Naive thymus-derived CD4-positive, alpha-beta T cell (primary cell): ENCODE measurements at regions of chr4 and their contacts with region 1.

Region 1: DNA sequence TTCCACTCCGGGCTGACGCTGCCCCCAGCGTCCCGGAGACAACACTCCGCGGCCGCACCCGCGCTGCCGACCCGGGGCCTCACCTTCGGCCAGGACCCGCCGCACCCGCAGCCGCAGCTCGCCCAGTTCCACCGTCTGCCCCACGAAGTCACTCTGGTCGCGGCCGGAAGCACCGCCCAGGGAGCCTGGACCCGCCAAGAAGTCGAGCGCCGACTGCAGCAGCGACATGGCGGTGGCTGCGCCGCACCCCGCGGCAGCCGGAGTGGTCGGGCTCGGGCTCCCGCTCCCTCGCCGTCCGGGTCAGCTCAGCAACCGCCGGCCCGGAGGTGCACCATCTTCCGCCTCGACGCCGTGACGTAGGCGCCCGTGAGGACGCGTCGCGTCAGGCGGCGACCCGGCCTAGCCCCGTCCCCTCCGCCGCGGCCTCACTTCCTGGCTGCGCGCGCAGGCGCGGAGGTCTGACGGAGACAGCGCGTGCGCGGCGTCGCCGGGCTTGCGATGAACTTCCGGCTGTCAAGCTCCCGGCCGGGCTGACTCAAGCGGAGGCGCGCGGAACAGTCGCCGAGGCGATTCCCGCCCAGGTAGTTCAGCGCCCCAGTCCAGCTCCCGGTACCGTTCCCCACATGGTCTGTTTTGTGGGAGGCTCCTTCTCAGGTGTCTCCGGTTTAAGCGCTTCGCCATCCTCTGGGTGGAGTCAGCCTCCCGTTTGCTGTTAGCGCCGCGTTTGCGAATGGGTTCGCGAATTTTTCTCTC is at the starts of genes GAK and TMEM175:
- DNase-seq: peak; percentile 93 to 99 (median 98)
- ATAC-seq: peak; percentile 95
- H3K4me3 ChIP-seq: peak within 1 kb of the TSS; percentile 83
- H3K4me3 Mint-ChIP-seq: peak within 1 kb of the TSS; percentile 89 to 99 (median 95)
- H3K27ac ChIP-seq: peak within 1 kb of the TSS; percentile 99
- H3K27ac Mint-ChIP-seq: peak within 1 kb of the TSS; percentile 92 to 97 (median 96)
- H3K4me1 ChIP-seq: peaks cover 24 to 35% of the 10 kb centered on the region in 2 donors
- H3K4me1 Mint-ChIP-seq: peaks cover 35 to 59% (median 48%) of the 10 kb centered on the region in 7 donors
- H3K27me3 ChIP-seq: no peaks in the 10 kb centered on the region
- H3K27me3 Mint-ChIP-seq: no peaks in the 10 kb centered on the region
- total RNA-seq, gene GAK: 167 to 206 (median 174) TPM
- total RNA-seq, gene TMEM175: 28.9 to 69.9 (median 64.9) TPM

Region 2: GRCh38 chr4:473570-474457 is 458.3 kb before region 1 on chr4:
- CTCF ChIA-PET with region 1: no interaction called
- POLR2A ChIA-PET with region 1: no interaction called
- intact Hi-C with region 1: loop called in 1 of 2 experiments (anchors 1 kb)
- DNase-seq: peak; percentile 78 to 98 (median 96)
- ATAC-seq: peak; percentile 99
- H3K4me3 ChIP-seq: peak overlapping the region; percentile 93
- H3K4me3 Mint-ChIP-seq: peak overlapping the region; percentile 93 to 99 (median 98)
- H3K27ac ChIP-seq: peak overlapping the region; percentile 92
- H3K27ac Mint-ChIP-seq: peak overlapping the region; percentile 98 to 100 (median 100)
- H3K4me1 ChIP-seq: peaks cover 5 to 7% of the 10 kb centered on the region in 2 donors
- H3K4me1 Mint-ChIP-seq: peaks cover 17 to 47% (median 37%) of the 10 kb centered on the region in 7 donors
- H3K27me3 ChIP-seq: no peaks in the 10 kb centered on the region
- H3K27me3 Mint-ChIP-seq: no peaks in the 10 kb centered on the region

Region 3: DNA sequence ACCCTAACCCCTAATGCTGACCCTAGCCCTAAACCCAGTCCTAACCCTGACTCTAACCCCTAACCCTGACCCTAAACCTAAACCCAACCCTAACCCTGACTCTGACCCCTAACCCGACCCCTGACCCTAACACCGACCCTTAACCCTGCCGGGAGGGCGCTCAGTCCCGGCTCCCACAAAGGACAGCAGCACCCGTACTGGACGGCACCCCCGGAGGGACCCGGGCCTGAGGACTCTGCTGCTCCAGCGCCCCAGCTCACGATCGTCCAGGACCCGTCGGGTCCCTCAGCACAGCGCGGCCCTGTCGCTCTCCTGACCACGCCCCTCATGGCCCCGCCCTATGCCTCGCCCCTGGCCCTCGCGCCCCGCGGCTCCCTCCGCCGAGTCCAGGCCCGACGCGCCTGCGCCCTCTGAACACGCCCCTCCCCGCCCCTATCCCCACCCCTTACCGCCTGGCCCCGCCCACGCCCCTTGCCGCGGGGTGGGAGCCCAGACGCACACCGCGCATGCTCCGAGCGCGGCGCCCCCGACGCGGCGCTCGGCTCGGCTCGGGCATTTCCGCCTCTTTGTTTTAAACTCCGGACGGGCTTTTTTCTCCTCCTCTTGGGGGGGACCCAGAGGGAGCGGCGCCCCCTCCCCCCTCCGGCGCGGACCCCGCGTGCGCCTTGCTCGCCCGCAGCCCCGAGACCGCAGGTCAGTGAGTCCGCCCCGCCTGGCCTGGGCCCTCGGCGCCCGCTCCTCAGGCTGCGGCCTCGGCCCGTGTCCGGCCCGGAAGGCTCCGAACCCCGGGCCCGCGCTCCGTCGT is 226.7 kb before region 1 on chr4 and contains the start of gene PCGF3:
- CTCF ChIA-PET with region 1: no interaction called
- POLR2A ChIA-PET with region 1: no interaction called
- intact Hi-C with region 1: loop called in 1 of 2 experiments (anchors 2 kb)
- DNase-seq: peak; percentile 89 to 99 (median 92)
- ATAC-seq: peak; percentile 99
- H3K4me3 ChIP-seq: peak within 1 kb of the TSS; percentile 84
- H3K4me3 Mint-ChIP-seq: peak within 1 kb of the TSS; percentile 68 to 96 (median 83)
- H3K27ac ChIP-seq: peak within 1 kb of the TSS; percentile 96
- H3K27ac Mint-ChIP-seq: peak within 1 kb of the TSS; percentile 40 to 93 (median 59)
- H3K4me1 ChIP-seq: peaks cover 9 to 11% of the 10 kb centered on the region in 2 donors
- H3K4me1 Mint-ChIP-seq: peaks cover 21 to 30% (median 23%) of the 10 kb centered on the region in 7 donors
- H3K27me3 ChIP-seq: no peaks in the 10 kb centered on the region
- H3K27me3 Mint-ChIP-seq: no peaks in the 10 kb centered on the region
- total RNA-seq, gene PCGF3: 32.7 to 66.8 (median 42.3) TPM

Region 4: GRCh38 chr4:917466-917865 is 14.7 kb before region 1 on chr4:
- CTCF ChIA-PET with region 1: no interaction called
- POLR2A ChIA-PET with region 1: no interaction called
- intact Hi-C with region 1: loop called in 1 of 2 experiments (anchors 2 kb)
- DNase-seq: no peak
- ATAC-seq: no peak
- H3K4me3 ChIP-seq: no peak overlapping the region
- H3K4me3 Mint-ChIP-seq: peak overlapping the region in 3 of 10 donors; percentile 14 to 20 (median 17)
- H3K27ac ChIP-seq: no peak overlapping the region
- H3K27ac Mint-ChIP-seq: no peak overlapping the region
- H3K4me1 ChIP-seq: peaks cover 14 to 23% of the 10 kb centered on the region in 2 donors
- H3K4me1 Mint-ChIP-seq: peaks cover 46 to 71% (median 62%) of the 10 kb centered on the region in 7 donors
- H3K27me3 ChIP-seq: no peaks in the 10 kb centered on the region
- H3K27me3 Mint-ChIP-seq: no peaks in the 10 kb centered on the region

Region 5: DNA sequence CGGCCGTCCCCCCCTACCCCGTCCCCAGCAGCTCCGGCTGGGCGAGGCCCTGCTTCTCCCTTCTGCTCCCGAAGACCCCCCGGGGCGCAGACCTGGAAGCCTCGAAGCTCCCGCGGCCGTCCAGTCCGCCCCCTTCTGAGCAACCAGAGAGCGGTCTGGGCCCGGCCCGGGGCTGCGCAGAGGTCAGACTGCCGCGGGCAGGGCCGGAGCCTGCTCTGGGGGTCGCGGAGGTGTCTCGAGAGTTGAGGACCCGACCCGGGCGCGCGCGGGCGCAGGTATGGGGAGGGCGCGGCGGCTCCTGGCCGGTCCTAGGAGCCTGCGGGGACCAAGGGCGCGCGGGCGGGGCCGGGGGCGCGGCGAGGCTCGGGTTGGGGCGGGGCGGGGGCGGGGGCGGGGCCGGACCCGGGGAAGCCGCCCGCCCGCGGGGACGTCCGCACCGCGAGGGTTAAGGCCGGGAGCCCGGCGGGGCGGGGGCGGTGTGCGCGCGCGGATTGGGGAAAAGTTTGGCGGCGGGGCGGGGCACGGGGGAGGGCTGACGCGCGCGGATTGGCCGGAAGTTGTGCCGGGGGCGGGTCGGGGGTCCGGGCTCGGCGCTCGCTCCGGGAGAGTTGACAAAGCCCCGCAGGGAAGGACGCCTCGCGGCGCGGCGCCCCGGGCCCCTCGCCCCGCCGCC is 79.0 kb after region 1 on chr4 and contains the start of gene FGFRL1:
- CTCF ChIA-PET with region 1: interaction called, 3 read pairs
- POLR2A ChIA-PET with region 1: interaction called, 3 read pairs
- intact Hi-C with region 1: loop called (anchors 1 kb)
- DNase-seq: peak; percentile 78 to 95 (median 87)
- ATAC-seq: peak; percentile 78
- H3K4me3 ChIP-seq: peak within 1 kb of the TSS; percentile 77
- H3K4me3 Mint-ChIP-seq: peak within 1 kb of the TSS; percentile 86 to 97 (median 89)
- H3K27ac ChIP-seq: peak within 1 kb of the TSS; percentile 83
- H3K27ac Mint-ChIP-seq: peak within 1 kb of the TSS; percentile 76 to 96 (median 92)
- H3K4me1 ChIP-seq: peaks cover 0 to 10% of the 10 kb centered on the region in 2 donors
- H3K4me1 Mint-ChIP-seq: peaks cover 15 to 21% (median 18%) of the 10 kb centered on the region in 7 donors
- H3K27me3 ChIP-seq: no peaks in the 10 kb centered on the region
- H3K27me3 Mint-ChIP-seq: peaks cover 24 to 31% (median 27%) of the 10 kb centered on the region in 5 donors
- total RNA-seq, gene FGFRL1: 10.6 to 28.1 (median 22.0) TPM

Region 6: DNA sequence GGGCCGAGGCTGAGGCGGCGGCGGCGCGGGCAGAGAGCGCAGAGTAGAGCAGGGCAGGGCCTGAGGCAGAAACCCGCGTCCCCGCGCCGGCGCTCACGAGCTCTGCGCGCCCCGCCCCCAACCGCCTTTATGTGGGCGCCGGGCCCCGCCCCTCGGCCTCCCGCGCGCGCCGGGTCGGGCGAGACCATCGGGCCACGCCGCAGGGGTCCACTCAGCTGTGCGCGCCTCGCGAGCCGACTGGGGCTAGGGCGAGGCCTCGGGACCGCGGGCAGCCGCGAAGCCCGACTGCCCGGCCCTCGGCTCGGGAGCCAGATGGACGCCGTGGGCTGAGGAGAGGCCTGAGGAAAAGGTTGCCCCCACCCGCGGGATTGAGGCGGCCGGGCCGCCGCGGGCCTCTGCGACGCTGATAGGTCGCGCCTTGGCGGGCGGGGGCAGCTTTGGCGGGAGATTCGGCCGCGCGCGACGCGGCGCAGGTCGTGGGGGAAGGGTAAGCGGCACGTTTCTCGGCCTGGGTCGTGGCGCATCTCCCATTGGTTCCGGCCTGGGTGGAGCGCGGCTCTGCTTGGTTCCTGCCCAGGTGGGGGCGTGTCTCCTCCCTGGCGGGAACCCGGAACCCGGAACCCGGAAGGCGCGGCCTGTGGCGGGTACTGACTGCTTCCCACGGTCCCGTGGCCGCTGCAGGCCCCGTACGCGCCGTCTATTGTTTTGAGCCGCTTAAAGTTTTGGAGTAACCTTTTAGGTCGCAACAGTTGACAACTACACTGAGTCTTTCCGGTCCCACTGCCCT is 780.3 kb after region 1 on chr4 and contains the start of gene SLBP:
- CTCF ChIA-PET with region 1: no interaction called
- POLR2A ChIA-PET with region 1: no interaction called
- intact Hi-C with region 1: loop called in 1 of 2 experiments (anchors 2 kb)
- DNase-seq: peak; percentile 98 to 99 (median 98)
- ATAC-seq: peak; percentile 92
- H3K4me3 ChIP-seq: peak within 1 kb of the TSS; percentile 100
- H3K4me3 Mint-ChIP-seq: peak within 1 kb of the TSS; percentile 89 to 98 (median 94)
- H3K27ac ChIP-seq: peak within 1 kb of the TSS; percentile 99
- H3K27ac Mint-ChIP-seq: peak within 1 kb of the TSS; percentile 90 to 98 (median 94)
- H3K4me1 ChIP-seq: peaks cover 32 to 34% of the 10 kb centered on the region in 2 donors
- H3K4me1 Mint-ChIP-seq: peaks cover 11 to 67% (median 59%) of the 10 kb centered on the region in 7 donors
- H3K27me3 ChIP-seq: no peaks in the 10 kb centered on the region
- H3K27me3 Mint-ChIP-seq: no peaks in the 10 kb centered on the region
- total RNA-seq, gene SLBP: 29.5 to 103 (median 30.3) TPM